ENCODE measurements at regions of chr12 and their contacts with region 1.

Region 1: GRCh38 chr12:1644534-1645438 is 15.8 kb downstream of the WNT5B start:
- DNase-seq: peak; percentile 94

Region 2: GRCh38 chr12:1661553-1662335 is 17.0 kb after region 1 on chr12:
- intact Hi-C with region 1: no loop called
- DNase-seq: peak; percentile 96

Region 3: GRCh38 chr12:2276288-2277033 is 631.7 kb after region 1 on chr12:
- intact Hi-C with region 1: loop called in 1 of 2 experiments (anchors 5 kb)
- DNase-seq: no peak

Region 4: DNA sequence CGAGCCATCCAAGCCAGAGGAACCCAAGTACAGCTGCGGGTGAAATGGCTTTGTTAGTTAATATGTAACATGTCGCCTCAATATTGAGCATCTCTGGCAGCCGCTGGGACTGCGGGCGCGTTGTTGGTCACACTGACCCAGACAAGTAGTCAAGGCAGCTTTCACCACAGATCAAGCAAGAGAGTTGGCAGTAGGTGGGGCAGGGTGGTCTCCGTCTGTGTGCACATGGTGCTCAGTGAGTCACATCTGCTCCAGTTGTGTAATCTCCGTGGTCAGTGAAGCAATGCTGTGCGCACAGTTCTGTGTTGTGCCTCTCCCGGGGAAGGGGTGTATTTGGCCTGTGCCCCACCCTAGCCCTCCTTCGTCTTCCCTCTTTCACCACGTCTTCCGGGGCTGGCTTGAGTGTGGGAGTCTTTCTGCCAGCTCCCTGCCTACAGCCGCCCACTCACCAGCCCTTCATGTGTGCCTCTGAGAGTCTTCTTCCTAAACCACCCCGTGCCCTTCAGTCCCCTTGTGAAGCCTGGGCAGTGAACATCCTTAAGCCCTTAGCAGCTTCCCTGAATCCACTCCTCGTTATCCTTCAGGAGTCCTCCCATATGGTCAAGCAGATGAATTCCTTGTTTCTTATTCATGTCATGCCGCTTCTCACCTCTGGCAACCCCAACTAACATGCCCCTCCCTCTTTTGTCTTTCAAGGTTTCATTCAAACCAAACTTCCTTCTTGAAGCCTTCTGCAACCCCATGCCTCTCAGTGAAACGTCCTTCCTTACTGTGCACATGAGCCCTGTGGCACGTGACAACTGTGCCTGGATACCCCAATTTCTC is 650.1 kb after region 1 on chr12:
- intact Hi-C with region 1: no loop called
- DNase-seq: peak; percentile 85

Measured in posterior vena cava (tissue), 2 donors.